ENCODE measurements at regions of chrX and their contacts with region 1.

Region 1: GRCh38 chrX:108070891-108071290 is 20.5 kb downstream of the PSMD10 start:
- DNase-seq: no peak
- H3K4me3 ChIP-seq: no peak overlapping the region
- H3K4me3 Mint-ChIP-seq: no peak overlapping the region
- H3K27ac ChIP-seq: no peak overlapping the region
- H3K27ac Mint-ChIP-seq: no peak overlapping the region
- H3K4me1 ChIP-seq: no peaks in the 10 kb centered on the region
- H3K4me1 Mint-ChIP-seq: peaks cover 0 to 3% (median 2%) of the 10 kb centered on the region in 3 donors
- H3K27me3 ChIP-seq: no peaks in the 10 kb centered on the region
- H3K27me3 Mint-ChIP-seq: peaks cover 0 to 6% of the 10 kb centered on the region in 2 donors

Region 2: DNA sequence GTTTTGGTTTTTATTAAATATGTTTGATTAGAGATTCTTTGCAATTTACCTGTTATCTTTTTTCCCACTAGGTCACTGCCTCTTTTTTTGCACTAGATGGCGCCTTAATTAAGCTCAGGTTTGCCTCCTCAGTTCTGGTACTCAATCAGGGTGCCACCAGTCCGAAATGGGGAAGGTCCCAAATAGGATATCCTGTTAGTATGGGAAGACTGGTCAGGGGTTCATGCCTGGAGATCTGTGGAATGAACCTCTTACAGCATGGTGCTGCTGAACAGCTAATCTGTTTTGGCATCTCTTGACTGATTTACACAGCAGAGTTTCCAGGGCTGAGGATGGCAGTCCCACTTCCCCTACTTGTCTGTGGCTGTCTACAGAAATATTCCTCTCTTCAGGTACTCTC is 50.3 kb before region 1 on chrX:
- CTCF ChIA-PET with region 1: interaction called, 14 read pairs
- POLR2A ChIA-PET with region 1: interaction called, 3 read pairs
- DNase-seq: peak in 1 of 5 donors; percentile 27
- H3K4me3 ChIP-seq: peak overlapping the region; percentile 33
- H3K4me3 Mint-ChIP-seq: peak overlapping the region; percentile 76 to 95 (median 86)
- H3K27ac ChIP-seq: no peak overlapping the region
- H3K27ac Mint-ChIP-seq: peak overlapping the region; percentile 59 to 97 (median 90)
- H3K4me1 ChIP-seq: peaks cover 55% of the 10 kb centered on the region
- H3K4me1 Mint-ChIP-seq: peaks cover 62 to 92% (median 81%) of the 10 kb centered on the region in 3 donors
- H3K27me3 ChIP-seq: no peaks in the 10 kb centered on the region
- H3K27me3 Mint-ChIP-seq: no peaks in the 10 kb centered on the region